IMR-90 (cell line): ENCODE measurements at regions of chr4 and their contacts with region 1.

Region 1: GRCh38 chr4:4995103-4995907 is 24.0 kb downstream of the CYTL1 start:
- DNase-seq: peak; percentile 58
- ATAC-seq: peak; percentile 83
- H3K4me3 ChIP-seq: no peak overlapping the region
- H3K27ac ChIP-seq: no peak overlapping the region
- H3K4me1 ChIP-seq: peaks cover 12% of the 10 kb centered on the region
- H3K27me3 ChIP-seq: no peaks in the 10 kb centered on the region; the same call in 1 of the 2 replicates
- CTCF ChIP-seq: peak; percentile 86
- POLR2A ChIP-seq: 0 out of 2 replicates have a peak, but pooled peaks have one; percentile 20
- RAD21 ChIP-seq: peak; percentile 92

Region 2: DNA sequence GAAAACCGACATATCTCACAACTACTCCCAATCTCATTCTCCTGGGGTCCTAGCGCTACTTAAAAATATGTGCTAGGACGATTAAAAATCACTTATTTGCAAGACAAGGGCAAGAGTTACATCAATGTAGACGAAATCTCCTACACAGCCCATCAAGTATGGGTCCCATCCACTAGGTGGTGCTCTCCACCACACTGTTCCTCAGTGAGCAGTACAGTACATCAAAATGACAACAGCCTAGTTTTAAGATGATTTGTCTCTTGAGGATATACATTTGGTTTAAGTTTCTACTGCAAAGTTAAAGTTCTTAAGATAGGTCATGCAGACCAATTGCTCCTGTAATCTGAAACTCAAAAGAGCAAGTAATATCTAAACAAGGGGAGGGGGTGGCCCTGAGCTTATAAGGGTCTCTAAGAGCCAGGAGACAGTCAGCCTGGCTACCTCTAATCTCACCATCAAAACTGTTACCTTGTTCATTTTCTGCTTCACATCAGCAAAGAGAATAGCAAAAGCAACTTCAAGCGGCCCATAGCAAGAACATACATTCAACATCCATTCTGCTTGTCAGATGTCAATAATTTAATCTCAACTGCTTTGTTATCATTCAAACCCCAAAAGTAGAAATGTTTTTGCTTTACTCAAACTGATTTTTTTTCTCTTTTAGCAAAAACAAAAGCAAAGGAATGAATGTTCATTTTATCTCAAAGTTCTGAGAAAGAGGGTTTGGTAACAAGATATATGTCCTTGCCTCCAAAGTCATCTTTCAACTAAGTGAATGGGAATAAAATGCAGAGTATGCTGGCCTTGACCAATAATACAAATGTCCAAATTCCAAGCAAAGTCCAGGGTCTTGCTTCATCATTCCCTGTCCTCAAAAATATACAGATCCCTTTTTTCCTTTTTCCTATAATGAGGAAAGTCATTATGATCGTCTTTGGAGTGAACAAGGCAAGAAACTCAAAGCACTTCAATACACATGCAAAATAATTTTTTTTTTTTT is 506.6 kb before region 1 on chr4:
- CTCF ChIA-PET with region 1: interaction called, 5 read pairs
- POLR2A ChIA-PET with region 1: no interaction called
- dilution Hi-C with region 1: no loop called
- in situ Hi-C with region 1: loop called (anchors 10 kb)
- intact Hi-C with region 1: loop called (anchors 1 kb)
- DNase-seq: peak; percentile 83
- ATAC-seq: peak; percentile 92
- H3K4me3 ChIP-seq: no peak overlapping the region
- H3K27ac ChIP-seq: no peak overlapping the region
- H3K4me1 ChIP-seq: 0 out of 2 replicates have a peak, but pooled peaks cover 2% of the 10 kb centered on the region
- H3K27me3 ChIP-seq: no peaks in the 10 kb centered on the region
- CTCF ChIP-seq: peak; percentile 91
- POLR2A ChIP-seq: no peak
- RAD21 ChIP-seq: peak; percentile 93

Region 3: GRCh38 chr4:4659871-4660651 is 335.2 kb before region 1 on chr4:
- CTCF ChIA-PET with region 1: no interaction called
- POLR2A ChIA-PET with region 1: no interaction called
- dilution Hi-C with region 1: no loop called
- in situ Hi-C with region 1: no loop called
- intact Hi-C with region 1: no loop called
- DNase-seq: peak; percentile 94
- ATAC-seq: peak; percentile 86
- H3K4me3 ChIP-seq: no peak overlapping the region
- H3K27ac ChIP-seq: peak overlapping the region; percentile 80
- H3K4me1 ChIP-seq: peaks cover 13% of the 10 kb centered on the region
- H3K27me3 ChIP-seq: no peaks in the 10 kb centered on the region
- CTCF ChIP-seq: no peak
- POLR2A ChIP-seq: no peak
- RAD21 ChIP-seq: no peak

Region 4: GRCh38 chr4:5037553-5038551 is 42.5 kb after region 1 on chr4:
- CTCF ChIA-PET with region 1: no interaction called
- POLR2A ChIA-PET with region 1: no interaction called
- dilution Hi-C with region 1: no loop called
- in situ Hi-C with region 1: no loop called
- intact Hi-C with region 1: loop called (anchors 2 kb)
- DNase-seq: peak; percentile 99
- ATAC-seq: peak; percentile 84
- H3K4me3 ChIP-seq: no peak overlapping the region
- H3K27ac ChIP-seq: peak overlapping the region; percentile 96
- H3K4me1 ChIP-seq: peaks cover 35% of the 10 kb centered on the region
- H3K27me3 ChIP-seq: no peaks in the 10 kb centered on the region
- CTCF ChIP-seq: no peak
- POLR2A ChIP-seq: no peak
- RAD21 ChIP-seq: no peak

Region 5: GRCh38 chr4:5142726-5143125 is 147.4 kb after region 1 on chr4:
- CTCF ChIA-PET with region 1: no interaction called
- POLR2A ChIA-PET with region 1: no interaction called
- dilution Hi-C with region 1: no loop called
- in situ Hi-C with region 1: loop called (anchors 5 kb)
- intact Hi-C with region 1: loop called (anchors 1 kb)
- DNase-seq: peak; percentile 66
- ATAC-seq: peak; percentile 67
- H3K4me3 ChIP-seq: no peak overlapping the region
- H3K27ac ChIP-seq: no peak overlapping the region
- H3K4me1 ChIP-seq: no peaks in the 10 kb centered on the region
- H3K27me3 ChIP-seq: no peaks in the 10 kb centered on the region
- CTCF ChIP-seq: peak; percentile 67
- POLR2A ChIP-seq: no peak
- RAD21 ChIP-seq: peak; percentile 69

Region 6: GRCh38 chr4:5452156-5452555 is 456.9 kb after region 1 on chr4:
- CTCF ChIA-PET with region 1: no interaction called
- POLR2A ChIA-PET with region 1: no interaction called
- dilution Hi-C with region 1: no loop called
- in situ Hi-C with region 1: loop called (anchors 10 kb)
- intact Hi-C with region 1: no loop called
- DNase-seq: no peak
- ATAC-seq: no peak
- H3K4me3 ChIP-seq: no peak overlapping the region
- H3K27ac ChIP-seq: no peak overlapping the region
- H3K4me1 ChIP-seq: no peaks in the 10 kb centered on the region
- H3K27me3 ChIP-seq: no peaks in the 10 kb centered on the region
- CTCF ChIP-seq: no peak
- POLR2A ChIP-seq: no peak
- RAD21 ChIP-seq: no peak

Region 7: GRCh38 chr4:5791654-5792053 is 796.3 kb after region 1 on chr4:
- CTCF ChIA-PET with region 1: no interaction called
- POLR2A ChIA-PET with region 1: no interaction called
- dilution Hi-C with region 1: no loop called
- in situ Hi-C with region 1: no loop called
- intact Hi-C with region 1: loop called (anchors 2 kb)
- DNase-seq: no peak
- ATAC-seq: no peak
- H3K4me3 ChIP-seq: no peak overlapping the region
- H3K27ac ChIP-seq: no peak overlapping the region
- H3K4me1 ChIP-seq: no peaks in the 10 kb centered on the region
- H3K27me3 ChIP-seq: no peaks in the 10 kb centered on the region
- CTCF ChIP-seq: no peak
- POLR2A ChIP-seq: no peak
- RAD21 ChIP-seq: no peak